ENCODE measurements at regions of chr11 and their contacts with region 1.

Region 1: DNA sequence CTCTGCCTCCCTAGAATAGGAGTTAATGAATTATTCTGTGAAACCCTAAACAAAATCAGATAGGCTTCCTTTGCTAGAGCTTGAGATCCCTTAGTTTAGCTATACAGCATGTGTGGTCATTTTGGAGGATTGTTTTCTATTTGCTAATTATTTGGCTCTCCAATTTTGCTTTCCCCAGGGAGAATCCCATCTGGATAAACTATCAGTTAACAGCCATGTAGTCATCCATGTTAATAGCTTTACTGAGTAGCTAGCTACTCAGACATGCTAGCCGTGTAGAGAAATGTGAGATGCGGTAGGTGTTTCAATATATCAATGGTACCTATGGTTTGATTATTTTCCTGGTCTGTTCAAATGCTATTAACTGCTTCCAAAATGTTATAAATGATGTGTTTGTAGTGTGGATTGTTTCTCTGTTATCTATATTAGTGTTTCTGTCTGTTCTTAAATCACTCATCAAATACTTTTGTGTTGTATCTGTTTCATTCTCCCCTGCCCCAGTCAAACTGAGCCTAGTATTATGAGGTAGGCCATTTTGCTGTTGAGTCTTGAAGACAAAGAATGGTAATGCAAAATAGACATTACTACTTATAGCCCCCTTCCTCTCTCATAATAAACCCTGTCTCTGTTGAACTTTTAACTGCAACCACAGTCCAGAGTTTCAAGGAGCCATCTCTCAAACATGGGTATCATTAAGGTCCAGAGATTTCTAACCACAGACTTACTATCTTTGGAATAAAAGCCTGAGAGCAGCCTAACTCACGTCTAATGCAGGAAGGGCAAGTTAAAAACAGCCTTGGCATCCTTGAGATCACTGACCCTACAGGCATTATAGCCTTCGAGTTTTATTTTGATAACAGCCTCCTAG is 56.1 kb upstream of the GRAMD1B start:
- DNase-seq: no peak
- ATAC-seq: peak; percentile 17
- H3K4me3 Mint-ChIP-seq: no peak overlapping the region
- H3K27ac Mint-ChIP-seq: no peak overlapping the region
- H3K4me1 Mint-ChIP-seq: peaks cover 2% of the 10 kb centered on the region
- H3K27me3 Mint-ChIP-seq: peaks cover 11% of the 10 kb centered on the region
- CTCF ChIP-seq: no peak

Region 2: GRCh38 chr11:123093739-123094138 is 280.2 kb before region 1 on chr11:
- CTCF ChIA-PET with region 1: no interaction called
- POLR2A ChIA-PET with region 1: no interaction called
- intact Hi-C with region 1: loop called (anchors 10 kb)
- DNase-seq: no peak
- ATAC-seq: no peak
- H3K4me3 Mint-ChIP-seq: no peak overlapping the region
- H3K27ac Mint-ChIP-seq: no peak overlapping the region
- H3K4me1 Mint-ChIP-seq: no peaks in the 10 kb centered on the region
- H3K27me3 Mint-ChIP-seq: no peaks in the 10 kb centered on the region
- CTCF ChIP-seq: no peak

Measured in activated CD8-positive, alpha-beta T cell treated with anti-CD3 and anti-CD28 coated beads for 36 hours (primary cell).